ENCODE measurements at regions of chr13 and their contacts with region 1.

Region 1: DNA sequence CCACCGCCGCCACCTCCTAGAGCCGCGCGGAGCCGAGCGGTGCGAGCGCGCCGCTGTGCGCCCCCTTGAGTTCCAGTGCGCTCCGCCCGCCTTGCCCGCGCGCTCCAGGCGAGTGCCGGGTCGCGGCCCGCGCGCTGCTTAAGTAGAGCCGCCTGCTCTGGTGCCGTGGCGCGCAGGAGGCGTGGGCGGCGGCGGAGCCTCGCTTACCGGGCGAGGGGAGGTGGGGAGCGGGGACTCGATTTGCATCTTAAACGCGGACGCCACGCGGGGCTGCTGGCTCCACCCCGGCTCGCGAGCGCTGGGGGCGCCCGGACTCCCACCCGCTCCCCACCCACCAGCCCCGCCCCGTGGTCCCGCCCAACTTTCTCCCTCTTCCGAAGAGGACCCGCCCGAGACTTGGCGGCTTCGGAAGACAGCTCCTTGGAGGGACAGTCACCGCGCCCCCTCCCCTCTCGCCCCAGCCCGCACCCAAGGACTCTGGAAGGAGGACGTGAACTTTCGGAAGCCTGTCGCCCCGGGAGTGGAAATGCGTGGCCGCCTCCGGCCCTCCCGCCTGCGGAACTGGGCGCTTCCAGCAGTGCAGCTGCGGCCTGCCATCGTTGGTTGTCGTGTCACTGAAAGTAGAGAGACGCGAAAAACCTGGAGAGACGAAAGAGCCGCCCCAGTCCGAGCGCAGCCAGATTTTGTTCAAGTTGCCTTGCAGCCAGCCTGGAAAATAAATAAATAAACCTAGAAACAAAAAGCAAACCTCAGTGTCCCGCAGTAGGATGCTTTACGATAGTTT is at the start of gene KCTD12:
- DNase-seq: peak; percentile 79
- ATAC-seq: peak; percentile 78
- H3K4me3 Mint-ChIP-seq: peak within 1 kb of the TSS; percentile 88
- H3K27ac Mint-ChIP-seq: peak within 1 kb of the TSS; percentile 72
- H3K4me1 Mint-ChIP-seq: peaks cover 24% of the 10 kb centered on the region
- H3K27me3 Mint-ChIP-seq: no peaks in the 10 kb centered on the region
- CTCF ChIP-seq: no peak
- total RNA-seq, gene KCTD12: 4.5 and 5.5 TPM in 2 replicates

Region 2: DNA sequence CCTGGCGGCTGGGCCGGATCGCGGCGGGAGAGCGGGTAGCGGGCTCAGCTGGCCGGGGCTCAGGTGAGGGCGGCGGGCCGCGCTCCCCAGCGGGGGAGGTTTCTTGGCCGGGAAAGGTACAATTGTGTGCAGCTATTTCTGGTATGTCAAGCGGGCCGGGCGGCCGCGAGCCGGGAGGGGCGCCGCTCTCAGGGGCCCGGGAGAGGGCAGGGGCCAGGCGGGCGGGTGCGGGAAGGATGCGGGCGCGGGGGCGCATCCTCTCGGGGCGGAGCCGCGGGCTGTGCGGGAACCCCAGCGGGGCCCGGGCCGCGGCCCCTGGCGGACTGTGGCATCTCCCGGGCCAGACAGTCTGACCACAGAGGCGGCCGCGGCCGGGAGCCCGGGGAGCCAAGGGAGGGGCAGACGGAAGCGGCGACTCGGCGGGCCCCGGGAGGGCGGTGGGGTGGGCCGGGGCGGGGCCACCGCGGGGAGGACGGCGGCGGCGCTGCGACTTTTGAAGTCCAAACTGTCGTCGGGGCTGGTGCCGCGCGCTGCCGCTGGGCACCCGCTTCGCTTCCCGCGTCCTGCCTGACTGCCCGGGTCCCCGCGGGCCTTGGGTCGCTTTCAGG is 1250.6 kb before region 1 on chr13 and contains the start of gene LMO7:
- CTCF ChIA-PET with region 1: no interaction called
- POLR2A ChIA-PET with region 1: no interaction called
- intact Hi-C with region 1: loop called (anchors 5 kb)
- DNase-seq: peak; percentile 61
- ATAC-seq: peak; percentile 68
- H3K4me3 Mint-ChIP-seq: peak within 1 kb of the TSS; percentile 83
- H3K27ac Mint-ChIP-seq: no peak within 1 kb of the TSS
- H3K4me1 Mint-ChIP-seq: peaks cover 12% of the 10 kb centered on the region
- H3K27me3 Mint-ChIP-seq: no peaks in the 10 kb centered on the region
- CTCF ChIP-seq: no peak
- total RNA-seq, gene LMO7: 13.5 and 19.5 TPM in 2 replicates

Region 3: GRCh38 chr13:76632401-76633044 is 254.0 kb before region 1 on chr13:
- CTCF ChIA-PET with region 1: no interaction called
- POLR2A ChIA-PET with region 1: no interaction called
- intact Hi-C with region 1: no loop called
- DNase-seq: no peak
- ATAC-seq: no peak
- H3K4me3 Mint-ChIP-seq: no peak overlapping the region
- H3K27ac Mint-ChIP-seq: no peak overlapping the region
- H3K4me1 Mint-ChIP-seq: no peaks in the 10 kb centered on the region
- H3K27me3 Mint-ChIP-seq: peaks cover 2% of the 10 kb centered on the region
- CTCF ChIP-seq: no peak

Region 4: GRCh38 chr13:76667551-76667950 is 218.9 kb before region 1 on chr13:
- CTCF ChIA-PET with region 1: no interaction called
- POLR2A ChIA-PET with region 1: no interaction called
- intact Hi-C with region 1: loop called (anchors 5 kb)
- DNase-seq: no peak
- ATAC-seq: no peak
- H3K4me3 Mint-ChIP-seq: no peak overlapping the region
- H3K27ac Mint-ChIP-seq: no peak overlapping the region
- H3K4me1 Mint-ChIP-seq: no peaks in the 10 kb centered on the region
- H3K27me3 Mint-ChIP-seq: no peaks in the 10 kb centered on the region
- CTCF ChIP-seq: no peak

Region 5: DNA sequence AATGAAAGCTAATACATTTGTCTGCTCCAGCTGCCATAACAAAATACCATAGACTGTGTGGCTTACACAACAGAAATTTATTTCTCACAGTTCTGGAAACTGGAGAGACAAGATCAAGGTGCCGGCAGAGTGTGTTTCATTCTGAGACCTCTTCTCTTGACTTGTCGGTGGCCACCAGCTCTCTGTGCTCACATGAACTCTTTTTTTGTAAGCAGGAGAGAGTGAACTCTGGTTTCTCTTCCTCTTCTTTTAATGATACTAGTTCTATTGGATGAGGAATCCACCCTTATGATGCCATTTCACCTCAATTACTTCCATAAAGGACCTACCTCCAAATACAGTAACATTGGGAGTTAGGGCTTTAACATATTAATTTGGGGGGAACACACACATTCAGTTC is 12.0 kb before region 1 on chr13:
- CTCF ChIA-PET with region 1: interaction called, 25 read pairs
- POLR2A ChIA-PET with region 1: interaction called, 11 read pairs
- intact Hi-C with region 1: loop called (anchors 1 kb)
- DNase-seq: no peak
- ATAC-seq: peak; percentile 26
- H3K4me3 Mint-ChIP-seq: no peak overlapping the region
- H3K27ac Mint-ChIP-seq: no peak overlapping the region
- H3K4me1 Mint-ChIP-seq: peaks cover 16% of the 10 kb centered on the region
- H3K27me3 Mint-ChIP-seq: peaks cover 5% of the 10 kb centered on the region
- CTCF ChIP-seq: no peak

Region 6: DNA sequence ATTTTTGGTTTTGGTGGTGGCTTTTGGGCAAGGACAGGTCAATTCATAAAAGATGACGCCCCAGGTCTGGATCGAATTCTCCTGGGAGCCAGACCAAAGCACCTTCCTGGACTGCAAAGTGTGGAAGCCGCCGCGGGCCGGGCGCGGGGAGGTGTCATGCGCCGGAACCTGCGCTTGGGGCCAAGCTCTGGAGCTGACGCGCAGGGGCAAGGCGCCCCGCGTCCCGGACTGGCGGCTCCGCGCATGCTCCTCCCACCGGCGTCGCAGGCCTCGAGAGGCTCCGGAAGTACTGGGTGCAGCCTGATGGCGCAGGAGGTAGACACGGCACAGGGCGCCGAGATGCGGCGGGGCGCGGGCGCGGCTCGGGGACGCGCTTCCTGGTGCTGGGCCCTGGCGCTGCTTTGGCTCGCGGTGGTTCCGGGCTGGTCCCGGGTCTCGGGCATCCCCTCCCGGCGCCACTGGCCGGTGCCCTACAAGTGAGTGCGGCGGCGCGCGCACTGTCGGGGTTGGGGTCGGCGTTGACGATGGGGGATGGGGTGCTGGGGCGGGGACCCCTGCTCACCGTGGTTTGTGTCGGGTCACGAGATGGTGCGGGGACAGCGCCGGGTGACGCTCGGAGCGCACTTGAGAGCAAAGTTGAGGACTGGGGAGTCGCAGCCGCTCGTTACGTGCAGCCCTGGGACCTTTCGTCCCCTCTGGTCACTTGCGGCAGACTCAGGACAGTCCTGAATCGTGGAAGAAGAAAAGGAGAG is 105.5 kb after region 1 on chr13 and contains the start of gene CLN5:
- CTCF ChIA-PET with region 1: no interaction called
- POLR2A ChIA-PET with region 1: interaction called, 12 read pairs
- intact Hi-C with region 1: loop called (anchors 1 kb)
- DNase-seq: peak; percentile 93
- ATAC-seq: peak; percentile 95
- H3K4me3 Mint-ChIP-seq: peak within 1 kb of the TSS; percentile 98
- H3K27ac Mint-ChIP-seq: peak within 1 kb of the TSS; percentile 97
- H3K4me1 Mint-ChIP-seq: peaks cover 34% of the 10 kb centered on the region
- H3K27me3 Mint-ChIP-seq: no peaks in the 10 kb centered on the region
- CTCF ChIP-seq: no peak
- total RNA-seq, gene CLN5: 20.6 and 23.6 TPM in 2 replicates